ENCODE measurements at regions of chr2 and their contacts with region 1.

Region 1: DNA sequence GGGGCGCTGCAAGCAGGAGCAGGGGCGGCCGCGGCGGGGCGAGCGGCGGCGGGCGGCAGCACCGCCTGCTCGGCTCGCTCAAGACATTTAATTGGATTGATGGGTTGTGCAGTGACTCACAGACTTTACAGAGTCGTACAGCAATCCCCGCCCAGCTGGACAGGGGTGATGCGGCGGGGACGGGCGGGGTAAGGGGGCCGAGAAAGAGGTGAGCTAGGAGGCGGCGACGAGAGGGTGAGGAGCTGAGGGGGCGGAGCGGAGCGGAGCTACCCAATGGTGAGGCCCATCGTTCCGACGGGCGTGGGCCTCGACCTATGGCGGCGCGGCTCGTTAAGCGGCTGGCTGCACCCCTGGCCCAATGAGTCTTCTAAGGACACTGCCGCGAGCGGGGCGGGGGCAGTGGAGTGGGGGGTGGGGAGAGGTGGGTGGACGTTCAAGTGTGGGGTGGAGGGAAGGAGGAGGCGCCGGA is 97.1 kb upstream of the SERTAD2 start:
- DNase-seq: peak; percentile 95 to 100 (median 99)

Region 2: GRCh38 chr2:64653349-64654062 is 97.3 kb before region 1 on chr2 and contains the start of gene SERTAD2:
- intact Hi-C with region 1: loop called (anchors 1 kb)
- DNase-seq: peak; percentile 69 to 98 (median 81)

Region 3: GRCh38 chr2:64767670-64768468 is 17.0 kb after region 1 on chr2:
- intact Hi-C with region 1: loop called (anchors 1 kb)
- DNase-seq: peak; percentile 74 to 97 (median 85)

Region 4: GRCh38 chr2:64859312-64860212 is 108.7 kb after region 1 on chr2:
- intact Hi-C with region 1: loop called (anchors 5 kb)
- DNase-seq: peak in 8 of 10 donors; percentile 37 to 94 (median 61)

Region 5: GRCh38 chr2:64899081-64899865 is 148.4 kb after region 1 on chr2:
- intact Hi-C with region 1: no loop called
- DNase-seq: no peak